AG04449 (cell line): ENCODE measurements at regions of chr13 and their contacts with region 1.

Region 1: GRCh38 chr13:72808917-72809500 is 27.1 kb downstream of the PIBF1 start:
- DNase-seq: no peak
- H3K4me3 ChIP-seq: no peak overlapping the region
- CTCF ChIP-seq: no peak

Region 2: DNA sequence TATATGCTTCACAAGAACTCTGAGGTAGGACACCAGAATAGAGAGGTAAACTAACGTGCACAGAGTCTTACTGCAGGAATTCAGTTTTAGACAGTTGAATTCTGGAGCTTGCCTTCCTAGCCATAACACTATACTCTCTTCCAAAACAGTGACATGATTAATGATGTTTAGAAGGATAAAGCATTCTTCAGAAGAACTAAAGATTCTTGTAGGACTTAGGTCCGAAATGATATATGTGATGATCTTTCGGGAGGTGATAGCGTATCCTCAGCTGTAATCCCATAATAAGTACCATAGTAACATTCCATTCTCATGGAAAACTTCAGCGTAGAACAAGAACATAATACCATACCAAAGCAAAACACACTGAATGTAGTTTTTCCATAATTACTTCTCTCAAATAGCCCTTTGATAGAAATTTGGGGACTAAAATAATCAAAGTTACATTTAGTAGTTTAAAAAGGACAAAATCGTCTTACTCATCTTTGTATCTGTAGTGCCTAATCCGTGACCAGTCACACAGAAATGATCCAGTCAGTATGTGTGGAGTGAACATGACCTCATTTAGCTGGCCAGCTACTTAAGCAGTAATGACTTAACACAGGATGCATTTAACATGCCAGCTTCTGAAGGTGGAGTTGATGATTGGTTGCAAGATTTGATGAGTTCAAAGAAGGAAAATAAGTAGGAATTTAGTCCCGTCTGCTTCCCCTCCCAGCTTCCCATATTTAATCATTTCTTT is 11.3 kb after region 1 on chr13:
- CTCF ChIA-PET with region 1: interaction called, 18 read pairs
- POLR2A ChIA-PET with region 1: no interaction called
- DNase-seq: no peak
- H3K4me3 ChIP-seq: no peak overlapping the region
- CTCF ChIP-seq: no peak

Region 3: GRCh38 chr13:72970956-72971355 is 161.9 kb after region 1 on chr13:
- CTCF ChIA-PET with region 1: no interaction called
- POLR2A ChIA-PET with region 1: no interaction called
- DNase-seq: peak; percentile 23
- H3K4me3 ChIP-seq: no peak overlapping the region
- CTCF ChIP-seq: no peak

Region 4: DNA sequence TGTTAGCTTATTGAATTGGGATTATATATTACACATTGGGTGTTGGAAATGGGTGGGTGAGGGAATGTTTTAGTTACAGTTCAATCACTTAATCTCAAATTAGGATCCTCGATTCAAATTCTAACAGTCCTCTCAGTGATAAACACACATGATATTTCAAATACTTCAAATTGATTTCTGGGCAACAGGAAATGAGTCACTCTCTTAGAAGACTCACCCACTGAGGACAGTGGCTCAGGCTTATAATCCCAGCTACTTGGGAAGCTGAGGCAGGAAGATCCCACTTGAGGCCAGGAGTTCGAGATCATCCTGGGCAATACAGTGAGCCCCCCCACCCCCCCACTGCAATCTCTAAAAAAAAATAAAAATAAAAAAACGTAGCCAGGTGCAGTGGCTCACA is 889.9 kb after region 1 on chr13:
- CTCF ChIA-PET with region 1: interaction called, 10 read pairs
- POLR2A ChIA-PET with region 1: no interaction called
- DNase-seq: no peak
- H3K4me3 ChIP-seq: no peak overlapping the region
- CTCF ChIP-seq: no peak